GM10248 (cell line): ENCODE measurements at regions of chr13 and their contacts with region 1.

Region 1: GRCh38 chr13:72651144-72651543 is 76.3 kb downstream of the MZT1 start:
- DNase-seq: no peak
- CTCF ChIP-seq: peak; percentile 5

Region 2: DNA sequence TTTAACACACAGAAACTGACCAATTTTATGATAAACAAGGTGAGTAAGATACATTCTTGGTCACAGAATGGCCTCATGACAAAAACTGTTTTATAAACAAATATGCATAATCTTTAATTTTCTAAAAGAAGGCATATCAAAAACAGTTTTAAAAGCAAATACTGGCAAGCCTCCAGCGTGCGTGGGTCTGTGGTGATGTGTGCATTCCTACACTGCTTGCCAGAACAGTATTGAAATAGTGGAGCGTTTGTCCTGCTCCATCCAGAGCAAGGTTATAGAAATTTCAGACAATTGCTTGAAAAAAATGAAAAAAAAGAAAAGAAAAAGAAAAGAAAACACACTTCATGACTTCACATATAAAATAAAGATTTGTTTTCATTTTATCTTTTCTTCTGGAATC is 64.6 kb before region 1 on chr13:
- CTCF ChIA-PET with region 1: no interaction called
- POLR2A ChIA-PET with region 1: no interaction called
- DNase-seq: no peak
- CTCF ChIP-seq: no peak

Region 3: GRCh38 chr13:72634859-72635258 is 16.3 kb before region 1 on chr13:
- CTCF ChIA-PET with region 1: no interaction called
- POLR2A ChIA-PET with region 1: no interaction called
- DNase-seq: no peak
- CTCF ChIP-seq: no peak

Region 4: GRCh38 chr13:72666391-72666790 is 15.2 kb after region 1 on chr13:
- CTCF ChIA-PET with region 1: interaction called, 10 read pairs
- POLR2A ChIA-PET with region 1: no interaction called
- DNase-seq: no peak
- CTCF ChIP-seq: no peak